Transverse colon (tissue), 4 donors: ENCODE measurements at regions of chr6 and their contacts with region 1.

Region 1: DNA sequence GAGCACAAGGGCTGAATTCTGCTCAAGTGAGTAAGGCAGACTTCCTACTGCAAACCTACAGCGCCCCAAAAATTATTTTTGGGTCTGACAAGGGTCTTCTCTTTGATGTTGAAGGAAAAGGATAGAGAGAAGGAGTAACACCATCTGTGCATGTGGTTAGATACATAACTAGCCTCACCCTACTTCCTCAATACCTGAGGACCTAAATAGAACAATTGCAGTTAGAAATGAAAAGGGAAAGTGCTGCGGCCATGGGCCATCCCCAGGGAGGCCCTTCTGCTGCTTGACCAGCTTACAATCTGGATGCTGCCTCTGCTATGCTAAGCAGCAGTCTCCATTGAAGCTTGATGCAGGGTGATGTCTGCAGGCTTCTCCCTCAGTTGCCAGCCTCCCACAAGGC is 63.2 kb upstream of the ARMH2 start:
- DNase-seq: no peak
- H3K4me3 ChIP-seq: no peak overlapping the region
- H3K27ac ChIP-seq: no peak overlapping the region
- H3K4me1 ChIP-seq: peaks cover 0 to 13% (median 9%) of the 10 kb centered on the region in 4 donors
- H3K27me3 ChIP-seq: no peaks in the 10 kb centered on the region
- CTCF ChIP-seq: no peak
- EP300 ChIP-seq: no peak
- POLR2A ChIP-seq: no peak

Region 2: GRCh38 chr6:23611778-23612381 is 1250.1 kb before region 1 on chr6:
- in situ Hi-C with region 1: no loop called
- intact Hi-C with region 1: no loop called
- DNase-seq: no peak
- H3K4me3 ChIP-seq: no peak overlapping the region
- H3K27ac ChIP-seq: no peak overlapping the region
- H3K4me1 ChIP-seq: no peaks in the 10 kb centered on the region
- H3K27me3 ChIP-seq: no peaks in the 10 kb centered on the region
- CTCF ChIP-seq: no peak
- EP300 ChIP-seq: no peak
- POLR2A ChIP-seq: no peak

Region 3: GRCh38 chr6:24621626-24622289 is 240.2 kb before region 1 on chr6:
- in situ Hi-C with region 1: no loop called
- intact Hi-C with region 1: no loop called
- DNase-seq: no peak
- H3K4me3 ChIP-seq: no peak overlapping the region
- H3K27ac ChIP-seq: no peak overlapping the region
- H3K4me1 ChIP-seq: no peaks in the 10 kb centered on the region
- H3K27me3 ChIP-seq: no peaks in the 10 kb centered on the region
- CTCF ChIP-seq: no peak
- EP300 ChIP-seq: no peak
- POLR2A ChIP-seq: no peak

Region 4: DNA sequence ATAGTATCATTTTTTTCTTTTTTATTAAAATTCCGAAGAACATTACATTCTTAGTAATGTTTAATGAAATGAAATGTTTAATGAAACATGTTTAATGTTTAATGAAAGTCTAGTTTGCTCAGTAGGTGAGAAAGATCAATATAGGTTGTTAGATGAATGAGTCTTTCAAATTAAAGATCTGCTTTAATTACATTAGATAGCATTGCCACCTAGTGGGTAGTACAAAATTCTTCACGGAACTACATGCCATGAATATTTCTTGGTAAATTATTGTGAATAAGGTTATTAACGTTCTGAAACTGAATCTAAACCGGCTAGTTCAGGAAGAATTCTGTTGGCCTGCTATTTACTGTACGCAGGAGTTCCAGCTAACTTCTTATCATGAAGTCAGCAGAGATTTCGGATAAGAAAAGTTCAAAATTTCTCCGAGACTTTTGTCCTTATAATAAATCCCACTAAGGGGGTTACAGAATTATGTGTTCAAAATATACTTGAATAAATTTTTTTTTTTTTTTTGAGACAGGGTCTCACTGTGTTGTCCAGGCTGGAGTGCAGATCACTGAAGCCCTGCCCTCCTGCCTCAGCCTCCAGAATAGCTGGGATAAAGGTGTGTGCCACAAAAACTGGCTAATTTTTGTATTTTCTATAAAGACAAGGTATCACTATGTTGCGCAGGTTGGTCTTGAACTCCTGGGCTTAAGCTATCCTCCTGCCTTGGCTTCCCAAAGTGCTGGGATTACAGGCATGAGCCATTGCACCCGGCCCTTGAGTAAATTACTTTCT is 95.1 kb before region 1 on chr6:
- in situ Hi-C with region 1: no loop called
- intact Hi-C with region 1: no loop called
- DNase-seq: no peak
- H3K4me3 ChIP-seq: no peak overlapping the region
- H3K27ac ChIP-seq: no peak overlapping the region
- H3K4me1 ChIP-seq: peaks cover 0 to 12% (median 0%) of the 10 kb centered on the region in 4 donors
- H3K27me3 ChIP-seq: no peaks in the 10 kb centered on the region
- CTCF ChIP-seq: peak; percentile 35 to 55 (median 43)
- EP300 ChIP-seq: no peak
- POLR2A ChIP-seq: no peak

Region 5: GRCh38 chr6:25070547-25071366 is 208.8 kb after region 1 on chr6:
- in situ Hi-C with region 1: loop called in 3 of 4 experiments (anchors 5 to 10 kb)
- intact Hi-C with region 1: loop called (anchors 5 kb)
- DNase-seq: peak; percentile 84
- H3K4me3 ChIP-seq: no peak overlapping the region
- H3K27ac ChIP-seq: no peak overlapping the region
- H3K4me1 ChIP-seq: peaks cover 0 to 4% (median 0%) of the 10 kb centered on the region in 4 donors
- H3K27me3 ChIP-seq: no peaks in the 10 kb centered on the region
- CTCF ChIP-seq: peak; percentile 89 to 95 (median 92)
- EP300 ChIP-seq: no peak
- POLR2A ChIP-seq: no peak